ENCODE measurements at regions of chr11 and their contacts with region 1.

Region 1: GRCh38 chr11:64894070-64894796 is 15.8 kb upstream of the EHD1 start:
- DNase-seq: no peak
- H3K4me3 ChIP-seq: no peak overlapping the region
- H3K27ac ChIP-seq: peak overlapping the region in 1 of 4 donors; percentile 2
- H3K4me1 ChIP-seq: peaks cover 11 to 25% (median 17%) of the 10 kb centered on the region in 4 donors
- H3K27me3 ChIP-seq: no peaks in the 10 kb centered on the region
- CTCF ChIP-seq: peak; percentile 87 to 93 (median 90)
- EP300 ChIP-seq: no peak
- POLR2A ChIP-seq: no peak

Region 2: GRCh38 chr11:64341851-64342791 is 552.1 kb before region 1 on chr11:
- intact Hi-C with region 1: no loop called
- DNase-seq: peak; percentile 97
- H3K4me3 ChIP-seq: peak overlapping the region; percentile 43 to 54 (median 50)
- H3K27ac ChIP-seq: peak overlapping the region; percentile 74 to 88 (median 82)
- H3K4me1 ChIP-seq: peaks cover 7 to 33% (median 26%) of the 10 kb centered on the region in 4 donors
- H3K27me3 ChIP-seq: no peaks in the 10 kb centered on the region
- CTCF ChIP-seq: peak; percentile 39 to 65 (median 64)
- EP300 ChIP-seq: no peak
- POLR2A ChIP-seq: no peak

Region 3: GRCh38 chr11:64787526-64788320 is 106.5 kb before region 1 on chr11:
- intact Hi-C with region 1: loop called (anchors 10 kb)
- DNase-seq: peak; percentile 91
- H3K4me3 ChIP-seq: no peak overlapping the region
- H3K27ac ChIP-seq: peak overlapping the region in 2 of 4 donors; percentile 36
- H3K4me1 ChIP-seq: peaks cover 0 to 12% (median 3%) of the 10 kb centered on the region in 4 donors
- H3K27me3 ChIP-seq: no peaks in the 10 kb centered on the region
- CTCF ChIP-seq: peak; percentile 57 to 78 (median 65)
- EP300 ChIP-seq: no peak
- POLR2A ChIP-seq: no peak

Region 4: DNA sequence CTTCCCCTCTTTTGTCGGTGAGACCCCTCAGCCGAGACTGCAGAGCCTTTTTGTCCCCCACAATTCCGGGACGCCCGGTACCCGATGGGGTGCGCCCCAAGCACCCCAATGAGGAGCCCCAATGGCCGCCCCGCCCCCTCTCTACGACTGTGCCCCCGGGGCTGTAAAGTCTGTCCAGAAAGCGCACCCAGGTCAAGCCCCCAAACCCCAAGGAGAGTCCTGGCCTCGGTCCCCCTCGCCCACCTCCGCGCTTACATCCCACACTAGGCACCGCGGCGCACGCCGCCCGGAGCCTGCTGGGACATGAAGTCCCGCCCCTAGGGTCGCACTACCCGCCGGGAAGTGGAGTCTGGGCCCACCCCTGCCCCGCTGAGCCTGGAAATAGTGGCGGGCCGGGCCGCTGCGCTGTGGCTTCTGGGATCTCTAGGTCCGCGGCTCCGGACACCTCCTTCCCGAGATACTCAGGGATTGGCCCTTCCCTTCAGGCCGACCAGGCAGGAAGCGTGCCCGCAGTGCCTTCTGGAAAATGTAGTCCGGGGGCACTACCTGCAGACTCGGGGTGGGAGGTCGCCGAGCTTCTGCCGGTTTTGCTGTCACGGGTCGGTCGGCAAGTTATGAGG is 83.9 kb before region 1 on chr11 and contains the start of gene MEN1:
- intact Hi-C with region 1: no loop called
- DNase-seq: peak; percentile 98
- H3K4me3 ChIP-seq: peak within 1 kb of the TSS; percentile 62 to 95 (median 86)
- H3K27ac ChIP-seq: peak within 1 kb of the TSS; percentile 69 to 86 (median 80)
- H3K4me1 ChIP-seq: peaks cover 13 to 32% (median 19%) of the 10 kb centered on the region in 4 donors
- H3K27me3 ChIP-seq: no peaks in the 10 kb centered on the region
- CTCF ChIP-seq: peak in 1 of 3 experiments; percentile 42
- EP300 ChIP-seq: no peak
- POLR2A ChIP-seq: peak; percentile 54
- total RNA-seq, gene MEN1: 10.4 to 18.7 (median 11.5) TPM

Region 5: GRCh38 chr11:64846998-64847666 is 47.1 kb before region 1 on chr11:
- intact Hi-C with region 1: loop called (anchors 1 kb)
- DNase-seq: peak; percentile 96
- H3K4me3 ChIP-seq: no peak overlapping the region
- H3K27ac ChIP-seq: no peak overlapping the region
- H3K4me1 ChIP-seq: peaks cover 45 to 67% (median 58%) of the 10 kb centered on the region in 4 donors
- H3K27me3 ChIP-seq: peaks cover 0 to 8% (median 3%) of the 10 kb centered on the region in 4 donors
- CTCF ChIP-seq: peak in 2 of 3 experiments; percentile 94 to 99
- EP300 ChIP-seq: no peak
- POLR2A ChIP-seq: no peak